CD4-positive, alpha-beta memory T cell (primary cell): ENCODE measurements at regions of chr17 and their contacts with region 1.

Region 1: DNA sequence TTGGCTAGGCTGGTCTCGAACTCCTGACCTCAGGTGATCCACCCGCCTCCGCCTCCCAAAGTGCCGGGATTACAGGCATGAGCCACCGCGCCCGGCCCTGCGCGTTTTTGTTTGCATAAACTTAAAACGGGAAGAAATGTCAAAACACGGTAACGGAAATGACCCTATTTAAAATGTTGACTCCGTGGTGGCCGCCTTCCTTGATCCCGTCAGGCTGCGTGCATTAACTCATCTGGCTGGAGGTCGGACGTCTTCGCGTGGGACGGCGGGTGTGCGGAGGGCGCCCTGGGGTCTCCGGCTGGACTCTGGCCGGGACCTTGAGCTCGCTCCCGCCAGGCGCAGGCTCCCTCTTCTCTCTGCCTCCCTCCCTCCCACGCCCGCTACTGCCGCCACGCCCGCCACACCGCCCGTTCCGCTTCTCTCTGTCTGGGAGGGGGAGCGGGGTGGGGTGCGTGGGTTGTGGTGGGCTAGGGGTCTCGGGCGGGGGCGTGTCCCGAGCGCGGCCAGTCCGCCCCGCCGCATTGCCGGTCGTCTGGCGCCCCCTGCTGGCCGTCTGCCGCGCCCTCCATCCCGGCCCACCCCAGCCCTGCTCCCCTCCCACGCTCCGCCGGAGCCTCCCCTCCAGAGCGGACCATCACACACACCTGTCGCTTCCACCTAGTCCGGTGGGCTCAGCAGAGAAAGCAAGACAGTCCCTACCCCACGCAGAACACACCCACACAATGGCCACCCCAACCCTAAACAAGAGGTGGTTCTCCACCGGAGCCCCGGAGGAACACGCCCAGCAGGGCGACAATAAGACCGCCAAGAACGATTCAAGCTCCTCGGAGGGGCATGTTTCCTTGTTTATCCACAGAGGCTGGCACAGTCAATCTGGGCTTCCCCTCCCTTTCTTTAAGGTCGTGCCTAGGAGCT is 1.2 kb upstream of the CCDC42 start:
- DNase-seq: peak; percentile 66 to 78 (median 70)
- H3K4me3 ChIP-seq: peak overlapping the region; percentile 34 to 72
- H3K4me3 Mint-ChIP-seq: peak overlapping the region; percentile 89 to 95 (median 91)
- H3K27ac ChIP-seq: peak overlapping the region; percentile 56
- H3K27ac Mint-ChIP-seq: peak overlapping the region; percentile 87 to 95 (median 91)
- H3K4me1 ChIP-seq: peaks cover 17% of the 10 kb centered on the region
- H3K4me1 Mint-ChIP-seq: peaks cover 9 to 23% (median 12%) of the 10 kb centered on the region in 4 donors
- H3K27me3 ChIP-seq: no peaks in the 10 kb centered on the region
- H3K27me3 Mint-ChIP-seq: no peaks in the 10 kb centered on the region

Region 2: GRCh38 chr17:8376271-8377067 is 369.4 kb before region 1 on chr17 and contains the start of gene KRABD2:
- CTCF ChIA-PET with region 1: interaction called, 21 read pairs
- POLR2A ChIA-PET with region 1: interaction called, 3 read pairs
- intact Hi-C with region 1: no loop called
- DNase-seq: peak; percentile 84 to 91 (median 86)
- H3K4me3 ChIP-seq: peak within 1 kb of the TSS; percentile 86 to 97
- H3K4me3 Mint-ChIP-seq: peak within 1 kb of the TSS; percentile 88 to 91 (median 90)
- H3K27ac ChIP-seq: peak within 1 kb of the TSS; percentile 85
- H3K27ac Mint-ChIP-seq: peak within 1 kb of the TSS; percentile 87 to 93 (median 92)
- H3K4me1 ChIP-seq: peaks cover 43% of the 10 kb centered on the region
- H3K4me1 Mint-ChIP-seq: peaks cover 28 to 66% (median 47%) of the 10 kb centered on the region in 4 donors
- H3K27me3 ChIP-seq: no peaks in the 10 kb centered on the region
- H3K27me3 Mint-ChIP-seq: no peaks in the 10 kb centered on the region

Region 3: DNA sequence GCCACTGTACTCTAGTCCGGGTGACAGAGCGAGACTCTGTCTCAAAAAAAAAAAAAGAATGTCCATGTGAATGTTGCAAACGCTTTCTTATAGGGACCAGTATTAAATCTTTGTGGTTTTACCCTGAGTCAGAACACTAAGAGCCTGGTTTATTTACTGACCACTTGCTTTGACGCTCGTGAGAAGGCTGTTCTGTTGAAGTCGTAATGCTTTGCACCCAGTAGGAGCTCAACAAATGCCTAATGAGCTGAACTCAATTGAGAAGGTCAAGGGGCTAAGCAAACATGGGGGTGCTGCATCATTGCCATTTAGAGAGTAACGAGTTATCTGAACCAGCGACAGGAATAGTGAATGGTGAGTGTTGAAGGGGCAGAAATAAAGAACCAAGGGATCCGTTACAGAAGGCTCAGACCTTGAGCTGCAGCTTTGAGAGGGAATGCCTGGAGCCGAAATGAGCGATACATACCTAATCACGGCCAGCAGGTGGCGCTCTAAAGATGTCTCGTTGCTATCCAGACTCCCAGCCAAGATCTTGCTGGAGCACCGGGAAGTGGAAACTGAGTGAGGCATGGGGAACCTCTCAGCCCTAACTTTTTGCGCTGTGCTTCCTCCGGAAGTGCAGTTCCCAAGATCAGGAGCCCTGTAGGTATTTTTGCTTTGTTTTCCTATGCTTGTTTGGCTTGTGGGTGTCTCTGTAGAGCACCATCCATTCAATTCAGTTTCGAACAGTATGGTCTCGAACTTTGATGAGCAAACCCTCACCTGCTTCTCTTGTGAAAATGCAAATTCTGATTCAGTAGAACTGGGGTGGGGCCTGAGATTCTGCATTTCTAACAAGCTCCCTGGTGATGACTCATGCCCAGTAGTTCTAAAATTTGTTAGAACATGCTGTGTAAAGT is 335.6 kb before region 1 on chr17:
- CTCF ChIA-PET with region 1: interaction called, 84 read pairs
- POLR2A ChIA-PET with region 1: interaction called, 6 read pairs
- intact Hi-C with region 1: loop called (anchors 1 kb)
- DNase-seq: peak; percentile 69 to 73 (median 71)
- H3K4me3 ChIP-seq: no peak overlapping the region
- H3K4me3 Mint-ChIP-seq: peak overlapping the region in 2 of 8 donors; percentile 3 to 57
- H3K27ac ChIP-seq: no peak overlapping the region
- H3K27ac Mint-ChIP-seq: peak overlapping the region in 1 of 7 donors; percentile 57
- H3K4me1 ChIP-seq: peaks cover 20% of the 10 kb centered on the region
- H3K4me1 Mint-ChIP-seq: peaks cover 11 to 22% (median 15%) of the 10 kb centered on the region in 4 donors
- H3K27me3 ChIP-seq: no peaks in the 10 kb centered on the region
- H3K27me3 Mint-ChIP-seq: peaks cover 7 to 8% of the 10 kb centered on the region in 2 donors

Region 4: DNA sequence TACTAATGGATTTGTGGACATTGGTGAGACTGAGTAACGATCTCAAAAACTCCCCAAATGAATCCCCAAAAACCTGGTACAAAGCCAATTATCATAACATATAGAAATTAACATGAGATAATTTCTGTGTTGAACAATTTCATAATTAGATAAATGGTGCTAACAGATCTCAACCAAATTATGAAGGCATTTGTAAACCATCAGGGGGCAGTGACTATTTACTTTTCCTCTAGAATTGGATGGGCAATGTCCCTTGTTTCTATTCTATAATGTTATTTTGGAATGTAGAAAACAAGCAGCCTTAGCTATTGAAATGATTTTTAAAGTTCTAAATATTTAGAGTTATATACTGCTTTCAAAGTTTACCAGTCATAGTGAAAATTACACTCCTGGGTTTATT is 173.1 kb before region 1 on chr17:
- CTCF ChIA-PET with region 1: no interaction called
- POLR2A ChIA-PET with region 1: no interaction called
- intact Hi-C with region 1: loop called (anchors 2 kb)
- DNase-seq: peak in 1 of 5 donors; percentile 1
- H3K4me3 ChIP-seq: no peak overlapping the region
- H3K4me3 Mint-ChIP-seq: no peak overlapping the region
- H3K27ac ChIP-seq: no peak overlapping the region
- H3K27ac Mint-ChIP-seq: no peak overlapping the region
- H3K4me1 ChIP-seq: no peaks in the 10 kb centered on the region
- H3K4me1 Mint-ChIP-seq: no peaks in the 10 kb centered on the region
- H3K27me3 ChIP-seq: no peaks in the 10 kb centered on the region
- H3K27me3 Mint-ChIP-seq: peaks cover 4 to 7% of the 10 kb centered on the region in 2 donors

Region 5: GRCh38 chr17:8965394-8966168 is 219.7 kb after region 1 on chr17 and contains the start of gene PIK3R5:
- CTCF ChIA-PET with region 1: no interaction called
- POLR2A ChIA-PET with region 1: interaction called, 3 read pairs
- intact Hi-C with region 1: loop called (anchors 1 kb)
- DNase-seq: peak; percentile 73 to 83 (median 78)
- H3K4me3 ChIP-seq: peak within 1 kb of the TSS; percentile 74 to 99
- H3K4me3 Mint-ChIP-seq: peak within 1 kb of the TSS; percentile 97 to 100 (median 98)
- H3K27ac ChIP-seq: peak within 1 kb of the TSS; percentile 79
- H3K27ac Mint-ChIP-seq: peak within 1 kb of the TSS; percentile 92 to 100 (median 96)
- H3K4me1 ChIP-seq: peaks cover 45% of the 10 kb centered on the region
- H3K4me1 Mint-ChIP-seq: peaks cover 35 to 46% (median 39%) of the 10 kb centered on the region in 4 donors
- H3K27me3 ChIP-seq: no peaks in the 10 kb centered on the region
- H3K27me3 Mint-ChIP-seq: no peaks in the 10 kb centered on the region
- total RNA-seq, gene PIK3R5: 85.1 to 89.4 TPM